ENCODE measurements at regions of chr2 and their contacts with region 1.

Region 1: GRCh38 chr2:236180831-236181453 is 12.8 kb upstream of the GBX2 start:
- DNase-seq: no peak
- H3K4me3 ChIP-seq: no peak overlapping the region
- H3K27ac ChIP-seq: no peak overlapping the region
- H3K4me1 ChIP-seq: peaks cover 28% of the 10 kb centered on the region
- H3K27me3 ChIP-seq: peaks cover 82% of the 10 kb centered on the region
- CTCF ChIP-seq: peak; percentile 75

Region 2: GRCh38 chr2:235766278-235766677 is 414.7 kb before region 1 on chr2:
- intact Hi-C with region 1: loop called (anchors 5 kb)
- DNase-seq: no peak
- H3K4me3 ChIP-seq: no peak overlapping the region
- H3K27ac ChIP-seq: no peak overlapping the region
- H3K4me1 ChIP-seq: peaks cover 5% of the 10 kb centered on the region
- H3K27me3 ChIP-seq: no peaks in the 10 kb centered on the region
- CTCF ChIP-seq: peak; percentile 94

Region 3: DNA sequence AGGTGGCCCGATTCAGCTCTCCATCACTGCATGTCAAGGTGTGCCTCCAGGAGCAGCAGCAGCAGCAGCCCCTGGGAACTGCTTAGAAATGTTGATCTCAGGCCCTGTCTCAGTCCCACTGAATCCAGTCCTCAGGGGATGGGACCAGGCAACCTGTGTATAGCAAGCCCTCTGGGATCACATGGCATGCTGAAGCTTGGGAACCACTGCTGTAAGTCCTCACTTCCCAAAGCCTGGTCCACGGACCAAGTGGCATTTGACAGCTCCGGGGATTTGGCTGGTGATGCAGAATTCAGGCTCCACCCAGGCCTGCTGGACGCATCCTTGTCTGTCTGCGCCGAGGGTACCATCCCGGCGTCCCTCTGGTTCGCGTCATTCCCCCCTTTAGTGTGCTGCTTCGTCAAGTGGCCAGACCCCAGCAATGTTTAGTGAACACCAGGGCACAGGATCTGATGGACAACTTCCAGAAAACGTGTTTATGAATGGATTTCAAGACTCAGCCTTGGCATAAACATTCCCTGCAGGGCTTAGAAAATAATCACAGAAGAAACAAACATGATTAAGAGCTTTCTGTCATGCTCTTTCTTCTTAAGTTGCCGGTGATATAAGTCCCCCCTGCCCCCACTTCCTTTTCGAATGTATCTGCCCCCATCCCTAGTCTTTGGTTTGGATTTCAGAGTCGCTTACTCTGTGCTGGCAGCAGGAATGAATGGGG is 246.7 kb before region 1 on chr2:
- intact Hi-C with region 1: no loop called
- DNase-seq: no peak
- H3K4me3 ChIP-seq: no peak overlapping the region
- H3K27ac ChIP-seq: no peak overlapping the region
- H3K4me1 ChIP-seq: no peaks in the 10 kb centered on the region
- H3K27me3 ChIP-seq: no peaks in the 10 kb centered on the region
- CTCF ChIP-seq: no peak

Region 4: GRCh38 chr2:236503100-236503499 is 322.2 kb after region 1 on chr2:
- intact Hi-C with region 1: no loop called
- DNase-seq: no peak
- H3K4me3 ChIP-seq: no peak overlapping the region
- H3K27ac ChIP-seq: no peak overlapping the region
- H3K4me1 ChIP-seq: peaks cover 6% of the 10 kb centered on the region
- H3K27me3 ChIP-seq: peaks cover 25% of the 10 kb centered on the region
- CTCF ChIP-seq: no peak